ENCODE measurements at regions of chr1 and their contacts with region 1.

Region 1: GRCh38 chr1:62237361-62237760 is 42.7 kb downstream of the L1TD1 start:
- DNase-seq: no peak
- H3K4me3 ChIP-seq: no peak overlapping the region
- H3K4me3 Mint-ChIP-seq: no peak overlapping the region
- H3K27ac Mint-ChIP-seq: peak overlapping the region; percentile 88
- H3K4me1 ChIP-seq: peaks cover 32% of the 10 kb centered on the region
- H3K4me1 Mint-ChIP-seq: peaks cover 43% of the 10 kb centered on the region
- H3K27me3 ChIP-seq: no peaks in the 10 kb centered on the region
- H3K27me3 Mint-ChIP-seq: no peaks in the 10 kb centered on the region
- CTCF ChIP-seq: no peak

Region 2: GRCh38 chr1:61995641-61996040 is 241.7 kb before region 1 on chr1:
- CTCF ChIA-PET with region 1: no interaction called
- POLR2A ChIA-PET with region 1: no interaction called
- intact Hi-C with region 1: no loop called
- DNase-seq: no peak
- H3K4me3 ChIP-seq: no peak overlapping the region
- H3K4me3 Mint-ChIP-seq: no peak overlapping the region
- H3K27ac Mint-ChIP-seq: no peak overlapping the region
- H3K4me1 ChIP-seq: no peaks in the 10 kb centered on the region
- H3K4me1 Mint-ChIP-seq: no peaks in the 10 kb centered on the region
- H3K27me3 ChIP-seq: no peaks in the 10 kb centered on the region
- H3K27me3 Mint-ChIP-seq: no peaks in the 10 kb centered on the region
- CTCF ChIP-seq: no peak

Region 3: DNA sequence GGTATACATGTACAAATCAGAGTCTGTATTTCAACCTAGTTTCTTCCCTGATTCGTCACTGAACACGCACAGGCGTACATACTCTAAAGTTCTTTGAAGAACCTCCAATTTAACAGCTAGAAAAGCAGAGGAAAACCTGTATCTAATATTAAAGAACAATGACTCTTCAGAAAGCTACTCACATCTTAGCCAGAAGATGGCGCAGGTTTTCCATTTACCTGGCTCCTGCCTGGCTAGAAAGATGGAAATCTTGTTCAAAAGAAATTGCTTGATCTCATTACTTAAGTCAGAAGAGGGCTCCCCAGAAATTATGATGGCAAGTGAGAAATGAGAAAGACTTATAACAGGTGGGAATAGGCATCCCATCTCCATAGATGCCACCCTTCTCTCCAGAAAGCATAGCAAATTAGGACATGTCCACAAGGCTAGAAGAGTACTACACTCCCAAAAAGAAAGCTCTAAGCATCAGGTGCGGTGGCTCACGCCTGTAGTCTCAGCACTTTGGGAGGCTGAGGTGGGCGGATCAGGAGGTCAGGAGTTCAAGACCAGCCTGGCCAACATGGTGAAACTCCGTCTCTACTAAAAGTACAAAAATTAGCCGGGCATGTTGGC is 61.7 kb before region 1 on chr1:
- CTCF ChIA-PET with region 1: no interaction called
- POLR2A ChIA-PET with region 1: no interaction called
- intact Hi-C with region 1: loop called (anchors 1 kb)
- DNase-seq: peak in 1 of 2 experiments; percentile 53
- H3K4me3 ChIP-seq: no peak overlapping the region
- H3K4me3 Mint-ChIP-seq: no peak overlapping the region
- H3K27ac Mint-ChIP-seq: no peak overlapping the region
- H3K4me1 ChIP-seq: no peaks in the 10 kb centered on the region
- H3K4me1 Mint-ChIP-seq: peaks cover 13% of the 10 kb centered on the region
- H3K27me3 ChIP-seq: no peaks in the 10 kb centered on the region
- H3K27me3 Mint-ChIP-seq: no peaks in the 10 kb centered on the region
- CTCF ChIP-seq: peak; percentile 65

Region 4: DNA sequence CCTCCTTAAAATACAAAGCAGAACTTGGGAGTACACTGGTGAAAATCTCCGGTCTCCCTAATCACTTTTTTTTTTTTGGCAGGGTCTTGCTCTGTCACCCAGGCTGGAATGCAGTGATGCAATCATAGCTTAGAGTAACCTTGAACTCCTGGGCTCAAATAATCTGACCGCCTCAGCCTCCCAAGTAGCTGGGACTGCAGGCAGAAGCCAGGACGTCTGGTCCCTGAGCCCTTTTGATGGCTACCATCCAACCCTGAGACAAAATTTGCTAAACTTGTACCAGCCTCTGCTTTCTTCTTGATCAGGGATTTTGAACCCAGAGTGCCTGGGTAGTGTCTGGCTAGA is 38.6 kb before region 1 on chr1:
- CTCF ChIA-PET with region 1: no interaction called
- POLR2A ChIA-PET with region 1: no interaction called
- intact Hi-C with region 1: no loop called
- DNase-seq: no peak
- H3K4me3 ChIP-seq: no peak overlapping the region
- H3K4me3 Mint-ChIP-seq: no peak overlapping the region
- H3K27ac Mint-ChIP-seq: no peak overlapping the region
- H3K4me1 ChIP-seq: no peaks in the 10 kb centered on the region
- H3K4me1 Mint-ChIP-seq: no peaks in the 10 kb centered on the region
- H3K27me3 ChIP-seq: no peaks in the 10 kb centered on the region
- H3K27me3 Mint-ChIP-seq: no peaks in the 10 kb centered on the region
- CTCF ChIP-seq: no peak

Region 5: GRCh38 chr1:62439652-62440371 is 202.5 kb after region 1 on chr1:
- CTCF ChIA-PET with region 1: no interaction called
- POLR2A ChIA-PET with region 1: no interaction called
- intact Hi-C with region 1: no loop called
- DNase-seq: no peak
- H3K4me3 ChIP-seq: no peak overlapping the region
- H3K4me3 Mint-ChIP-seq: no peak overlapping the region
- H3K27ac Mint-ChIP-seq: no peak overlapping the region
- H3K4me1 ChIP-seq: no peaks in the 10 kb centered on the region; the same call in none of the 2 replicates
- H3K4me1 Mint-ChIP-seq: peaks cover 8% of the 10 kb centered on the region
- H3K27me3 ChIP-seq: no peaks in the 10 kb centered on the region
- H3K27me3 Mint-ChIP-seq: no peaks in the 10 kb centered on the region
- CTCF ChIP-seq: no peak